Activated CD4-positive, alpha-beta memory T cell treated with anti-CD3 and anti-CD28 coated beads, Interleukin-2, amount 10 ng/mL, durations not matched to agents 7 days and 5 days (primary cell): ENCODE measurements at regions of chr6 and their contacts with region 1.

Region 1: DNA sequence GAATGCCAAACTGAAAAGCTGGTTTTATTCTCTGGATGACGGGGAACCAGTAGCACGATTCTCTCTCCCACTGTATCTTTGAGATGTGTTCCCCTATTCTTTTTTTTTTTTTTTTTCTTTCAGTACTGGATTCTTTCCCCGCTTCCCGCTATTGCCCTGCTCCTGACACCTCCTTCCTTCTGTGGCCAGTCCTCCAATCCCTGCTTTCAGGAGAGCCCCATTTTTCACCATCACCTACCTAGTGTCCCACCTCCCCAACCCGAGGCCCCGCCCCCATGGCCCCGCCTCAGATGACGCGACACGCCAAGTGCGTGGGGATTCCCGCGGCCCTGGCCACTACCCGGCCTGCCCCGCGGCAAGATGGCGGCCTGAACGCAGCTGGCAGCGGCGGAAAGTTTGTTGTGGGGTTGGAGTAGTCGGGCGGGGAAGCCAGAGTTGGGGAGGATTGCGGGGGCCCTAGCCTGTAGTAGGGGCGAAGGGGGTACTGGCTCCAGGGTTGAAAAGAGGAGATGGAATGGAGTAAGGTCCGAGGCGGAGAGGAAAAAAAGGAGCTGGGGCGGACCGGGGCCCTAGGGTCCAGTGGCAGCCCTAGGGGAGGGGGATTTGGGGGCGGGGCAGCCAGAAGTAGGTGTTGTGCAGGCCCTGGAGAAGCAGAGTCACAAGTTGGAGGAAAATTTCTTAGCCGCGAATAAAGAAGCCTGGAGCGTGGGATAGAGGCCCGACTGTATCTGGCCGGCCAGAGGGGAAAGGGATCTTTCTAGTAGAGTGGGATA is at the start of gene TJAP1:
- DNase-seq: peak; percentile 96
- H3K4me3 Mint-ChIP-seq: peak within 1 kb of the TSS; percentile 94
- H3K27ac Mint-ChIP-seq: peak within 1 kb of the TSS; percentile 85
- H3K4me1 Mint-ChIP-seq: peaks cover 46% of the 10 kb centered on the region
- H3K27me3 Mint-ChIP-seq: no peaks in the 10 kb centered on the region
- total RNA-seq, gene TJAP1: 34.7 to 36.6 TPM

Region 2: DNA sequence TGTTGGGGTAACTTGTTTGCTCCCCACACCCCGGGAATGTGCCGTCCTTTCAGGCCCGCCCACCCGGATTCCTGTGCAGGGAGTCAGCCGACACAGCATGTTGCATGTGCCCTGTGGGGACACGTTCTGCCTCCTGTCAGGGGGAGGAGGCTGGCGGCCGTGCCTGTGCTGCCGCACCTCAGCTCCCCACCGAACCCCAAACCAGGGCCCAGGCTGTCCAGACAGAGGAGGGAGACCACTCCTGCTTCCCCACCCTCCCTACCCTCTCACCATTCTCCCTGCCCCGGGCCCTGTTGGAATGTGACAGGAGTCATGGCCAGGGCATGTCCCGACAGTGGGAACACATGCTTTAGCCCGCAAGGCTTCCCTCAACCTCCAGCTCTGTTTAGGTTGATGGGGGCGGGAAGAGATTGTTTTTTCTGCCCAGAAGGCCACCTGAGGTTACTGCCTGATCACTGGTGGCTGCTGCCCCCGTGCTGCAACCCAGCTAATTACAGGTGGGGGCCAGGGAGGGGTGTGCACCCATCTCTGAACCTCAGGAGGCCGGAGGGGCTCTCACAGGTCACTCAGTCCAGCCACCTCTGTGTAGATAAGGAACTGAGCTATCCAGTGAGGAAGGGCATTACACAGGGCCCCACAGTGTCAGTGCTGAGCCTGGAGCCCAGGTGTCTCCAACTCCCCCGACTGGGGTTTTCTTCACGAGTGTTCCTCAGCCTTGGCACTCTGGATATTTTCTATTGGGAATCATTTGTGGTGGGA is 19.1 kb after region 1 on chr6:
- CTCF ChIA-PET with region 1: interaction called, 3 read pairs
- POLR2A ChIA-PET with region 1: interaction called, 10 read pairs
- DNase-seq: no peak
- H3K4me3 Mint-ChIP-seq: no peak overlapping the region
- H3K27ac Mint-ChIP-seq: no peak overlapping the region
- H3K4me1 Mint-ChIP-seq: peaks cover 23% of the 10 kb centered on the region
- H3K27me3 Mint-ChIP-seq: no peaks in the 10 kb centered on the region